ENCODE measurements at regions of chr7 and their contacts with region 1.

Region 1: GRCh38 chr7:47818796-47819606 is 129.3 kb downstream of the PKD1L1 start:
- DNase-seq: peak; percentile 23
- H3K4me3 ChIP-seq: no peak overlapping the region
- CTCF ChIP-seq: peak; percentile 85

Region 2: DNA sequence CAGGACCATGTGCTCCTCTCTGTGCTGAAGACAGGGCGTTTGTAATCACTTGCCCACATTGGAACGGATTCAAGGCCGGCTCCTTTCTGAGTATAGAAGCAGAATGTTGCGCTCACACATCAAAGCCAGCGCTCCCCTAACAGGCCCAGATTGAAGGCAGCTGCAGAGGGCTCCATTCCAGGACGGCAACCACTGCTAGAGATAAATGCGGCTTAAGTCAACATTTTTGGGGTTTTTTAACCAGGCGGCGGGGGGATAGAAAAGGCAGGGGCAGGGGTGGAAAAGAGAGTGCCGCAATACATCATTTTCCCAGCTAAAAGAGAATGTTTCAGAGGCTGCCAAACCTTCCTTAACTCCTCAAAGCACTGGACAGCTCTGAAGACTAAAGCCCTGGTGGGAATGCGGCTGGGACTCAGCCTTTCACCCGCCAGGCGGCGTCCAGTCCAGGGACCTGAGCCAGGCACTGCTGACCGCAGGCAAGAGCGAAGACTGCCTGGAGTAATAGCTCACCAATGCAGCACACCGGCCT is 426.7 kb before region 1 on chr7:
- CTCF ChIA-PET with region 1: interaction called, 14 read pairs
- POLR2A ChIA-PET with region 1: no interaction called
- DNase-seq: no peak
- H3K4me3 ChIP-seq: no peak overlapping the region
- CTCF ChIP-seq: peak; percentile 71

Region 3: DNA sequence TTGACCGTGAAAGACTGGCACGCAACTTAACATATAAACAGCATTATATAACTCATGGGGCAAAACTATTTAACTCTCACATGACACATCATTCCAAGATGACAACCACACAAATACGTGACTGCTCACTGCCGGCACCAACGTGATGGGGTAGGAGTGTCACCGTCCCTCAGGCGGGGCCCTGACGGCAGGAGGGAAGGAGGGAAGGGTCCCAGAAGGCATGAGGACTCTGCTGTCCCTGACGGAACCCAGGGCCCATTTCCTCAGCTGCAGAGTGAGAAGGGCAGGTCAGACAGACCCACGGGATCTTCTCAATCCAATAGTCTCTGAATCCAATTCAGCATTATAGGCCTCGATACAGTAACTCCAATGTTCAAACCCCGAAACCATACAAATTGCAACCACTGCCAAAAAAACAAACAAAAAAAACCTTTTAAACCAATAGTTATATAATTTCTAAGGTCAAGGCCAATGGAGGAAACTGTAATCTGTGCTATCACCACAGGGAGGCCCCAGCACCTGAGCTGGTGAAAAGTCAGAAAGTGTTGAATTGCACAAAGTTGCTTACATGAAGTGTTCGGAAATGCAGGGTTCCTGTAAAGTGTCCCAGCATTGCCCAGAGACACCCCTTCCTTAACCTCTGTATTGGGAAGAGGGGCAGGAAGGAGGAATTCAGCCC is 374.5 kb before region 1 on chr7:
- CTCF ChIA-PET with region 1: interaction called, 16 read pairs
- POLR2A ChIA-PET with region 1: no interaction called
- DNase-seq: no peak
- H3K4me3 ChIP-seq: no peak overlapping the region
- CTCF ChIP-seq: peak; percentile 47

Region 4: DNA sequence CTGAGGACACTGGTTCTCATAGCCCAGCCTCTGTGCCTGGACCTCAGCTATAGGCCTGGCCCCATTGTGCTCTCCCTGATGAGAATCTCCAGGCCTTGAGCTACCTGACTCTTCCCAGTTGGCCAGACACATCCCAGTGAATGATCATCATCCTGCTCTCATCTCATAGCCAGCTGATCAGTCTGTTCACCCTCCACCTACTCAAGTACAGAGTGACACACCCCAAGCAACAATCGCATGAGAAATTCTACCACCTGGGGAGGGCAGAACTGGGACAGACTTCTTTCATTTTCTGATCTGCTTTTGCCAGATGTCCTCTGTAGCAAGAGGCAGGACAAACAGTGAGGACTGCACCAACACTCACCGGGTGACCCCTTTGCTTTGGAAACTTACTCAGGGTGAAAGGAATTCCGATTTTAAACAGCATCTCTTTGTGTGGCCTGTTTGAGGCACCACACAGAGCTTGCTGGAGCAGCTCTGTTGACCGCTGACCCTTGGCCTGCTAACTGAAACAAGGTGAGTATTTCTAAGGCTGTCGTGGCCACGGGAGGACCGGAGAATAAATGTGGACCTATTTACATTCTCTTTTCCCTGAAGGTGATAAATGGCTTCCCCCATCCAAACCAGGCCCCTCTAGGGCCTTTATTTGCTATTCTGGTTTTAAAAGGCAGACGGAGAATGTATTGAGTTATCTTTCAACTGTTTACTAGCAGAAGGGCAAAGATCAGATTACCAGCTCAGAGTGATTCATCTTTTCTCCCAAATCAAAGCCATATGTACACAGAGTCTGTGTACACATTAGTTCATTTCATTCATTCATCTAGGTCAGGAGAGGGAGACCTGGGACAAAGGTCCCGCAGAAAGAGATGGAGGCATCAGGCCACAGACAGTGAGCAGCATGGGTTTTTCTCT is 55.7 kb before region 1 on chr7:
- CTCF ChIA-PET with region 1: interaction called, 11 read pairs
- POLR2A ChIA-PET with region 1: no interaction called
- DNase-seq: no peak
- H3K4me3 ChIP-seq: no peak overlapping the region
- CTCF ChIP-seq: no peak

Region 5: GRCh38 chr7:47795631-47796030 is 23.4 kb before region 1 on chr7:
- CTCF ChIA-PET with region 1: interaction called, 14 read pairs
- POLR2A ChIA-PET with region 1: no interaction called
- DNase-seq: peak; percentile 96
- H3K4me3 ChIP-seq: peak overlapping the region; percentile 59
- CTCF ChIP-seq: no peak

Region 6: GRCh38 chr7:47806701-47807103 is 12.3 kb before region 1 on chr7:
- CTCF ChIA-PET with region 1: interaction called, 21 read pairs
- POLR2A ChIA-PET with region 1: no interaction called
- DNase-seq: no peak
- H3K4me3 ChIP-seq: no peak overlapping the region
- CTCF ChIP-seq: no peak

Measured in AG04449 (cell line).